ENCODE measurements at regions of chr21 and their contacts with region 1.

Region 1: DNA sequence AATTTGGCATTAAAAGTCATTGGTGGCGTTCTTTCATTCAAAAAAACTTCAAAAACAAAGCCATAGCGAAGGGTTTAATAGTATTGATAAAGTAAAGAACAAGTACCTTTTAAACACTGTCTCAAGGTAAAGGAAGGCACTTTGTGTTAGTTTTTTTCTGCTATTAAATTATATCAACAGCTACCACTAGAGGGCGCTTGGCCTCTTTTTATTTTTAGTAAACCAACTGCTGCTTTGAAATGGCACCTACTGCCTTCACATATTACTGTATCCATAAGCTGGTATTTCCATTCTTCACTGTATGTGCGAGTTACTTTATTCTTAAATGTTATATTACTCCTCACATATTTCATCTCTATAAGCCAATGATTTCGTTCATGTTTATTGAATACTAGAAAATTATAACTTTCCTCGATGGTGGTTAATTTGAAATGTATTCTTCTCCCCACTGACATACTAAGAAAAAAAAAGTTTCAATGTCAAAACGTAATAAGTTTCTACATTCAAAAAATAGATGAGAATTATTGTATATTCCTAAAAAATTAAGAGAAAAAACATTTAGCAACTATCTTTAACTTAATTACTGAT is 125.7 kb upstream of the CXADR start:
- DNase-seq: peak; percentile 1
- ATAC-seq: peak; percentile 74
- H3K4me3 ChIP-seq: no peak overlapping the region
- H3K27ac ChIP-seq: no peak overlapping the region
- H3K4me1 ChIP-seq: no peaks in the 10 kb centered on the region
- H3K27me3 ChIP-seq: no peaks in the 10 kb centered on the region
- CTCF ChIP-seq: peak; percentile 46 to 71 (median 54)
- EP300 ChIP-seq: no peak
- POLR2A ChIP-seq: no peak
- RAD21 ChIP-seq: peak; percentile 83

Region 2: GRCh38 chr21:16509476-16509875 is 877.6 kb before region 1 on chr21:
- CTCF ChIA-PET with region 1: no interaction called
- POLR2A ChIA-PET with region 1: no interaction called
- RAD21 ChIA-PET with region 1: no interaction called
- SMC1A ChIA-PET with region 1: no interaction called
- in situ Hi-C with region 1: no loop called
- intact Hi-C with region 1: no loop called
- DNase-seq: no peak
- ATAC-seq: peak; percentile 16; the same call in 2 of the 3 replicates
- H3K4me3 ChIP-seq: no peak overlapping the region
- H3K27ac ChIP-seq: no peak overlapping the region
- H3K4me1 ChIP-seq: no peaks in the 10 kb centered on the region
- H3K27me3 ChIP-seq: no peaks in the 10 kb centered on the region
- CTCF ChIP-seq: no peak
- EP300 ChIP-seq: no peak
- POLR2A ChIP-seq: no peak
- RAD21 ChIP-seq: no peak

Region 3: DNA sequence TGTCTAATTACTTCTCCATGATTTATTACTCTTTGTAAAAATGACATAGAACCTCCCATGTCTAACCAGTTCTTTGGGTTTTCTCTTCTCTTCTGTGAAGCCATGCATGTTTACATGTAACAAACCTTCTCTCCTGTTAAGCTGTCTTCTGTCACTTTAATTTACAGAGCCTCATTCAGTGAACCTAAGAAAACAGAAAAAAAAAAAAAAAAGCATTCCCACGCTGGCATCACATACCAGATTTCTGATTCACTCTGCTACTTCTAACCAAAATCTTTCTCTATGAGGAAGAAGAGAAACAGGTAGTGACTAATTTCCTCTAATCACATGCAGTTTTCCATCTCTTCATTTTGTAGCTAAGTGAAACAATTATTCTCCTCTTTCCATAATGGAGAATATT is 15.7 kb before region 1 on chr21:
- CTCF ChIA-PET with region 1: no interaction called
- POLR2A ChIA-PET with region 1: no interaction called
- RAD21 ChIA-PET with region 1: no interaction called
- SMC1A ChIA-PET with region 1: no interaction called
- in situ Hi-C with region 1: no loop called
- intact Hi-C with region 1: no loop called
- DNase-seq: no peak
- ATAC-seq: no peak
- H3K4me3 ChIP-seq: no peak overlapping the region
- H3K27ac ChIP-seq: no peak overlapping the region
- H3K4me1 ChIP-seq: no peaks in the 10 kb centered on the region
- H3K27me3 ChIP-seq: no peaks in the 10 kb centered on the region
- CTCF ChIP-seq: no peak
- EP300 ChIP-seq: no peak
- POLR2A ChIP-seq: no peak
- RAD21 ChIP-seq: no peak

Region 4: DNA sequence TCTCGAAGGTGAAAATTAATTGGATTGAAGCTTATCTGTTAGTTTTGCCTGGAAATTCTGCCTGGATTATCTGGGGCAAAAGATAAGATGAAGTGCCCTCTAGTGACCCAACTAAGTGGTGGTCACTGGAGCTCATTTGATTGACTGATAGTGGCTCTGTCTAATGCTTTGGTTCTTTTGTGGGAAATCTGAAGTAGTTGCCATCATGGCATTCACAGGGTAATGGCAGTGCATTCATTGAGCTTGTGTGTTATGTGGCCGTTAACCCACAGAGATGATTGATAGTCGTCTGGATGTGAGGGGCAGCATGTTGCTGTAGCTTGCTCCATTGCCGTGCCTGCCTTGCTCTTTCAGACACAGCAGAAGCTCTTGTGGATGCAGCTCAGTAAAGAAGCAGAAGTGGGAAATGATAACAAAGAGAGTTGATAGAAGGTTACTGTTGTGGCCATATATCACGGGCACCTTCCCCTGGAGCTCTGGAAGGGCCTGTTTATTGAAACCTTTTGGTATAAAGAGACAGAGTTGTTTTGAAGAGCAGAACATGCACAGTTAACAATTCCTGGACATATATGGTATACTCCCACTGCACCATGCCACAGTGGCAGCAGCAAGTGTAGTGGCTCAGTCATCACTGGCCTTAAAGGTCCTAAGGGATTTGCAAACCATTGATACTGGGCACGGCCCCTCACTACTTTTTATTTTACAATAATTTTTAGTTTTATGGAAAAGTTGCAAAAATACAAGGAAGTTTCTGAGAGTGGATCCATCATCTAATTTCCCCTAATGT is 167.7 kb after region 1 on chr21:
- CTCF ChIA-PET with region 1: interaction called, 20 read pairs
- POLR2A ChIA-PET with region 1: no interaction called
- RAD21 ChIA-PET with region 1: interaction called, 5 read pairs
- SMC1A ChIA-PET with region 1: interaction called, 6 read pairs
- in situ Hi-C with region 1: no loop called
- intact Hi-C with region 1: loop called (anchors 10 kb)
- DNase-seq: no peak
- ATAC-seq: peak; percentile 32; the same call in 1 of the 3 replicates
- H3K4me3 ChIP-seq: no peak overlapping the region
- H3K27ac ChIP-seq: no peak overlapping the region
- H3K4me1 ChIP-seq: no peaks in the 10 kb centered on the region
- H3K27me3 ChIP-seq: no peaks in the 10 kb centered on the region
- CTCF ChIP-seq: peak; percentile 15 to 25 (median 18); a peak in 2 of 6 replicates
- EP300 ChIP-seq: no peak
- POLR2A ChIP-seq: no peak
- RAD21 ChIP-seq: peak; percentile 37; the same call in 1 of the 2 replicates

Region 5: DNA sequence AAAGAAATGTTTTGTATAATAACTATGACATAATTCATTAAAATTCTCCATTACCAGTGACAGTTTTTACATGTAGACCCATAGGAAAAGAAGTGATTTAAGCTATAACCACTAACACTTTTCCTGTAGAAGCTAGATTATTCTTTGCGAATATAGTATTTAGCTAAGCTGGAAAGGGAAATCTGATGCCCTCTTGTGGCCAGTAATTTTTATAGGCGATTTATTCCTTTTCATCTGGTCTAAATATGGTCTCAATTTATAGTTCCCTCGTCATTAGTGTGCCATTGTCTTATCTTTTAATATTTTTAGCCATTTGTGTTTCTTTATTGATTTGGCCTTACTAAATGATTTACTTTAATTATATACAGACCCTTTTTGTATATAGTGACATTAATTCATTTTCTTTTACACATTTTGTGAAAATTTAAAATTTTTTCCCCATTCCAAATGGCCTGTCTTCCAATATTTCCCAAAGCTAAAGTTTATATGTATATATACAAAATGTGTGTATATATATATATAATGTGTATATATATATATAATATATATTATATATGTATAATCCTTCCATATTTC is 198.8 kb after region 1 on chr21:
- CTCF ChIA-PET with region 1: interaction called, 107 read pairs
- POLR2A ChIA-PET with region 1: no interaction called
- RAD21 ChIA-PET with region 1: interaction called, 30 read pairs
- SMC1A ChIA-PET with region 1: interaction called, 29 read pairs
- in situ Hi-C with region 1: no loop called
- intact Hi-C with region 1: loop called (anchors 1 kb)
- DNase-seq: no peak
- ATAC-seq: peak; percentile 55; the same call in 2 of the 3 replicates
- H3K4me3 ChIP-seq: no peak overlapping the region
- H3K27ac ChIP-seq: no peak overlapping the region
- H3K4me1 ChIP-seq: no peaks in the 10 kb centered on the region
- H3K27me3 ChIP-seq: no peaks in the 10 kb centered on the region
- CTCF ChIP-seq: peak; percentile 35 to 51 (median 36); a peak in 4 of 6 replicates
- EP300 ChIP-seq: no peak
- POLR2A ChIP-seq: no peak
- RAD21 ChIP-seq: peak; percentile 66